HEK293 (cell line): ENCODE measurements at regions of chr10 and their contacts with region 1.

Region 1: GRCh38 chr10:92965314-92965713 is 95.3 kb upstream of the CYP26C1 start:
- H3K4me3 ChIP-seq: no peak overlapping the region
- H3K27ac ChIP-seq: no peak overlapping the region
- H3K4me1 ChIP-seq: no peaks in the 10 kb centered on the region
- CTCF ChIP-seq: no peak

Region 2: GRCh38 chr10:92689663-92690210 is 275.6 kb before region 1 on chr10 and contains the start of gene HHEX:
- CTCF ChIA-PET with region 1: no interaction called
- POLR2A ChIA-PET with region 1: no interaction called
- H3K4me3 ChIP-seq: peak within 1 kb of the TSS; percentile 61
- H3K27ac ChIP-seq: peak within 1 kb of the TSS; percentile 78
- H3K4me1 ChIP-seq: peaks cover 6% of the 10 kb centered on the region
- CTCF ChIP-seq: no peak; the same call in 1 of the 2 replicates

Region 3: DNA sequence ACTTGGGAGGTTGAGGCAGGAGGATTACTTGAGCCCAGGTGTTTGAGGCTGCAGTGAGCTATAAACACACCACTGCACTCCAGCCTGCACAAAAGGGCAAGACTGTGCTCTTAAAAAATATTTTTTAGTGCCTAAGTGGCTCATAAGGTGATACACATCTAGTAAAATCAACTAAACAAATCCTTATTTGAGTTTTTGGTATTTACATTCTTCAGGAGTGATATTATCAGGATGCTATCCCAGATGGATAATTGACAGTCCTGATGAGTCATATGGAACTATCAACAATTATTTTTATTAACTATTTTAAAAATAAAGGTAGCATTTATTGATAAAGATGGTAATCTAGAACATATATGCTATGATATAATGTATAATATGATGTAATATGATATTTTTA is 23.0 kb before region 1 on chr10:
- CTCF ChIA-PET with region 1: interaction called, 13 read pairs
- POLR2A ChIA-PET with region 1: no interaction called
- H3K4me3 ChIP-seq: no peak overlapping the region
- H3K27ac ChIP-seq: no peak overlapping the region
- H3K4me1 ChIP-seq: no peaks in the 10 kb centered on the region
- CTCF ChIP-seq: no peak